ENCODE measurements at regions of chrX and their contacts with region 1.

Region 1: GRCh38 chrX:107324499-107325320 is 118.3 kb downstream of the DNAAF6 start:
- H3K4me3 ChIP-seq: no peak overlapping the region
- H3K27ac ChIP-seq: no peak overlapping the region
- H3K4me1 ChIP-seq: 0 out of 2 replicates have a peak, but pooled peaks cover 3% of the 10 kb centered on the region
- CTCF ChIP-seq: 0 out of 2 replicates have a peak, but pooled peaks have one; percentile 36

Region 2: DNA sequence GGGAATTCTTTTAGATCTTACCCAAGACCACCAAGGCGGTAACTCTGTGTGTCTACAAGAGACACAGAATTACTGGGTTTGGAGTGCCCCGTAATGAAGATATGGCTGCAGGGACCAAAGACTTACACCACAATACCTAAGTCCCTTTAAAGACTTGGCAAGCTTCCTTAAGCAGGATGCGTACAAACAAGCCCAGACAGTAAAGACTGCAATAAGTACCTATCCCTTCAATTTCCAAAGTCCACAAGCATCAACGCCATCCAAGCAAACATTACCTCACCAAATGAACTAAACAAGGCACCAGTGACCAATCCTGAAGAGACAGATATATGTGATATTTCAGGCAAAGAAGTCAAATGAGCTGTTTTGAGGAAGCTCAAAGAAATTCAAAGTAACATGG is 640.5 kb before region 1 on chrX:
- CTCF ChIA-PET with region 1: no interaction called
- POLR2A ChIA-PET with region 1: no interaction called
- H3K4me3 ChIP-seq: no peak overlapping the region
- H3K27ac ChIP-seq: no peak overlapping the region
- H3K4me1 ChIP-seq: no peaks in the 10 kb centered on the region
- CTCF ChIP-seq: no peak

Region 3: DNA sequence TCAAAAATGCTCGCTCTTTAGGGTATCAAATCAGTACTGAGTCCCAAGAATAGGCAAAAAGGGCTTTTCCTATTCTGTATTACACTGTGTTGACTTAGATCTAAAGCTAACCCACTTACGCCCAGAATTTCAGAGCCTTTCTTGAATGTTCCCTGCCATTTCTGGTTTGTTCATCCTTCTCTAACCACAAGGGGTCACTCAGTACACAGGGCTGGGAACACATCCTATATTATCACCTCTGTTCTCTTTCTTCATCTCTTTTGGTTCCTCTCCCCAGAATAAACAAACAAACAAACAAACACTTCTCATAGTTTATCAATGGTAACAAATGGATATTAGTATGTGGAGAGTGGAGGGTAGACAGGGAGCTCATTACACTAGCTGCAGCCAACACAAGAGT is 299.2 kb before region 1 on chrX:
- CTCF ChIA-PET with region 1: interaction called, 10 read pairs
- POLR2A ChIA-PET with region 1: no interaction called
- H3K4me3 ChIP-seq: no peak overlapping the region
- H3K27ac ChIP-seq: no peak overlapping the region
- H3K4me1 ChIP-seq: no peaks in the 10 kb centered on the region
- CTCF ChIP-seq: peak; percentile 76

Measured in HEK293 (cell line).